PC-3 (cell line): ENCODE measurements at regions of chr3 and their contacts with region 1.

Region 1: DNA sequence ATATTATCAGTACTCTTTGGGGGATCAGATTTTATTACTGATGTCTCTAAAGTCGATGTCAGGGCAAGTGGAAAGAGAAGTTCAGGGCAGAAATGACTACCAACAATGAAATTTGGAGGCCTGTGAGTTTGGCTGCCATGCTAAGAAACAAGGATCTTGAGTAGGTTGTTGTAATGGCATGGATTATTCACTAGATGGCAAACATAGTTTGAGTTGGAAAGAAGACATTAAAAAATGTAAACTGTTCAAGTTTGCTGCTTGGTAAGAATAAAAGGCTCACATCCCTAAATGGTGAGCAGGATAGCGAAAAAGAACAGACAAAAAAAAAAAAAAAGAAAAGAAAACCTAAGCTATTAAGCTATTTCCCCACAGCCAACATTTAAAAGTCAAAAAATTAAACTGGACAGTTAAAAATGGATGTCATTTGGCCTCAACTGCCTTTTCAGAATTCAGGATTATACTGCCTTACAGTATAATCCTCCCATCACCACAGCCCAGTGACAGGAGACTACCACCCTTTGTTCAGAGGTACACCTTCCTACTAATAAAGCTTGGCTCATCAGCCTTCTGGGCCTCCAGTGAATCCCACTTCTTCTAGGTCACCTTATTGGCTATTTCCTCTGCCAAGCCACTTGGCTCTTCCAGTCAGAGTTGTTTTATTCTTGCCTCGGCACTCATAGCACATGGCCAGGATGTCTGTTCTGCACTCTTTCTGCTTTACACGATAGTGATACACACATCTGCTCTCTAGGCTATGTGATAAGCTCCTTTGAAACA is 163.7 kb downstream of the PLD1 start:
- DNase-seq: peak; percentile 69
- ATAC-seq: peak; percentile 40
- H3K4me3 ChIP-seq: no peak overlapping the region
- H3K27ac ChIP-seq: no peak overlapping the region
- H3K4me1 ChIP-seq: no peaks in the 10 kb centered on the region
- H3K27me3 ChIP-seq: no peaks in the 10 kb centered on the region
- CTCF ChIP-seq: peak; percentile 81

Region 2: GRCh38 chr3:171772427-171773056 is 126.0 kb after region 1 on chr3:
- CTCF ChIA-PET with region 1: interaction called, 5 read pairs
- POLR2A ChIA-PET with region 1: no interaction called
- intact Hi-C with region 1: loop called (anchors 1 kb)
- DNase-seq: peak; percentile 74
- ATAC-seq: peak; percentile 45
- H3K4me3 ChIP-seq: no peak overlapping the region
- H3K27ac ChIP-seq: no peak overlapping the region
- H3K4me1 ChIP-seq: peaks cover 20% of the 10 kb centered on the region
- H3K27me3 ChIP-seq: no peaks in the 10 kb centered on the region
- CTCF ChIP-seq: peak; percentile 91

Region 3: DNA sequence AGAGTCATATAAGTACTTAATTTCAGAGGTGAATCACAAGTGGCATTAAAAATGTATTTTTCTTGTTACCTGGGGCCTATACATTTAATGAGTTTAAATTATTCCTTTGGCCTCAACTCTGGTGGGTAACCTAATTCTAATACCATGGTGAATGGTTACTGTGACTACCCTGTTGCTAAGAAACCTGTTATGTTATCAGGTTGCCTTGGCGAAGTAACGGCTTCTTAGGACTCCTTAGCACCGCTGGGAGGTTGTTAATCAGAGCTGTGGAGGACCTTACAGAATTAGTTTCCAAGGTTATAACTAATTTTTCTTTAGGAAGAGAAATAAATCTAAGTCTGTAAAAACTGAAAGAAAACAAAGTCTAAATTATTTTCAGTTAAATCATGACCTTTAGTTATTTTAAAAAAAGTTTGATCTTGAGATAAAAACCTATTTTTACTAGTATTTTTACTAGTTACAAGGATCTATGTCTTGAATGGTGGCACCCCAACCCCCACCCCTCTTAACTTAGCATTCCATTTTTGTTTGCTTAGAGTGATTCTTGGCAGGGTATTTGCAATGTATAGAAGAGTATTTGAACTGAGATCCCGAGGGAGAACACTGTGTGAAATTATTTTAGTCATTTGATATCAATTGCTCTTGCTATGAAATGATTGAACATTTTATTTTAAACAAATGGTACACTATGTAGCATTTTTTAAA is 548.3 kb after region 1 on chr3:
- CTCF ChIA-PET with region 1: no interaction called
- POLR2A ChIA-PET with region 1: no interaction called
- intact Hi-C with region 1: loop called (anchors 5 kb)
- DNase-seq: peak; percentile 52
- ATAC-seq: peak; percentile 70
- H3K4me3 ChIP-seq: no peak overlapping the region
- H3K27ac ChIP-seq: 0 out of 2 replicates have a peak overlapping the region, but pooled peaks have one; percentile 4
- H3K4me1 ChIP-seq: peaks cover 15% of the 10 kb centered on the region
- H3K27me3 ChIP-seq: no peaks in the 10 kb centered on the region
- CTCF ChIP-seq: no peak

Region 4: DNA sequence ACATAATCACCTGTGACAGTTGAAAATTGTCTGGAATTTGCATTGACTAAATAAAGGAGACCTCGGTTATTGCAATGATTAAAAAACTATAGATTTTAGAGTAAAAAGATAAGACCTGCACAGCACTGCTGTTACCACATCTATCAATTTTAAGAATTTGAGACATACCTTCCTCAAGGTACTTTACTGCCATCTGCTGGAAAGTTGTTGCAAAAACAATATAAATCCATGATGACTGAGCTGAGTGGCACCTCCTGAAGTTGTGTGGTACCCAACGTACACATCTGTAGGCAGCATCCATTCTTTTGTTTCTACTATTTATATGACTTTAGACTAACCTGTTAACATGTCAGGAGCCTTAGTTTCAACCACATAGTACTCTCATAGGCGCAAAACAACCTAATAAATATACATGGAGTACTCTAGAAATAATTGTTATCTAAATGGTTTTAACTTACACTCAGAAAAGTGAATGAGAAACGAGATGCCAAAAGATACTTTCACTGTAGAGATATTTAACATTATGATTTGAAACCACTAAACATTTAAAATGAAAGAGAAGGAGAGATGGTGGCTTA is 695.0 kb after region 1 on chr3:
- CTCF ChIA-PET with region 1: no interaction called
- POLR2A ChIA-PET with region 1: no interaction called
- intact Hi-C with region 1: loop called (anchors 5 kb)
- DNase-seq: peak; percentile 89
- ATAC-seq: peak; percentile 84
- H3K4me3 ChIP-seq: no peak overlapping the region
- H3K27ac ChIP-seq: no peak overlapping the region
- H3K4me1 ChIP-seq: no peaks in the 10 kb centered on the region
- H3K27me3 ChIP-seq: no peaks in the 10 kb centered on the region
- CTCF ChIP-seq: peak; percentile 84